Aorta (tissue), 5 donors: ENCODE measurements at regions of chr17 and their contacts with region 1.

Region 1: DNA sequence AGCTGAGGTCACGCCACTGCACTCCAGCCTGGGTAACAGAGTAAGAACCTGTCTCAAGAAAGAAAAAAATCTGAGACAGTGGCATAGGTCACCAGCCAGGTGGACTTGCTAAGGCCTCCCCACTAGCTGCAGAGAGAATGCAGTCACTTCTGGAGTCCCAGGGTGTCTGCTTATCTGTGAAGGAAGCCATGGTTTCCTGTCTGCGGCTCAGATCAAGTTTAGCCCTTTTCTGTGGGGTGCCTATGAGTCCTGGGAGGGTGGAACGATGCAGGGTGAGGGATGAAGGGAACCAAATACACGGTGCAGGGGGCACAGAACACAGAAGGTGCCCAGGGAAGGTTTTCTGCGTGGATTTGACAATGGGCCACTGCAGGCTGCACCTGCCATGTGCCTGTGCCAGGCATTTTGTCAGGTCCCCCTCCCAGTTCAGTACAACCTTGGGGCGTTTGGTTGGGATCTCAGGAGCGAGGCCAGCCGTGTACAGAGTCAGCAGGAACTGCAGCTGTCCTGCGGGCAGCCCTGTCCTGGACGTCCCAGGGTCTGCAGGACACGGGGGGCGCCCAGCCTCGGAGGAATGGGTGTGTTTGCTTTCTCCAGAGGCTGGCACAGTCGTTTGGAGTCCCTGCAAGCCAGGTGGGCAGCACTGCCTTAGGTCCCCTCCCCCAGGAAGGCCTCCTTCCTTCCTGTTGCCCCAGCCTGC is 41.8 kb downstream of the RAB11FIP4 start:
- DNase-seq: no peak
- ATAC-seq: no peak
- H3K4me3 ChIP-seq: no peak overlapping the region
- H3K27ac ChIP-seq: no peak overlapping the region
- H3K4me1 ChIP-seq: no peaks in the 10 kb centered on the region
- H3K27me3 ChIP-seq: no peaks in the 10 kb centered on the region

Region 2: GRCh38 chr17:31524926-31525800 is 91.9 kb after region 1 on chr17:
- intact Hi-C with region 1: loop called (anchors 1 to 5 kb)
- DNase-seq: peak; percentile 93 to 98
- ATAC-seq: peak; percentile 81
- H3K4me3 ChIP-seq: no peak overlapping the region
- H3K27ac ChIP-seq: no peak overlapping the region
- H3K4me1 ChIP-seq: no peaks in the 10 kb centered on the region
- H3K27me3 ChIP-seq: no peaks in the 10 kb centered on the region

Region 3: GRCh38 chr17:31900877-31901276 is 467.6 kb after region 1 on chr17:
- intact Hi-C with region 1: loop called (anchors 5 to 10 kb)
- DNase-seq: no peak
- ATAC-seq: no peak
- H3K4me3 ChIP-seq: peak overlapping the region; percentile 82
- H3K27ac ChIP-seq: no peak overlapping the region
- H3K4me1 ChIP-seq: no peaks in the 10 kb centered on the region
- H3K27me3 ChIP-seq: no peaks in the 10 kb centered on the region

Region 4: DNA sequence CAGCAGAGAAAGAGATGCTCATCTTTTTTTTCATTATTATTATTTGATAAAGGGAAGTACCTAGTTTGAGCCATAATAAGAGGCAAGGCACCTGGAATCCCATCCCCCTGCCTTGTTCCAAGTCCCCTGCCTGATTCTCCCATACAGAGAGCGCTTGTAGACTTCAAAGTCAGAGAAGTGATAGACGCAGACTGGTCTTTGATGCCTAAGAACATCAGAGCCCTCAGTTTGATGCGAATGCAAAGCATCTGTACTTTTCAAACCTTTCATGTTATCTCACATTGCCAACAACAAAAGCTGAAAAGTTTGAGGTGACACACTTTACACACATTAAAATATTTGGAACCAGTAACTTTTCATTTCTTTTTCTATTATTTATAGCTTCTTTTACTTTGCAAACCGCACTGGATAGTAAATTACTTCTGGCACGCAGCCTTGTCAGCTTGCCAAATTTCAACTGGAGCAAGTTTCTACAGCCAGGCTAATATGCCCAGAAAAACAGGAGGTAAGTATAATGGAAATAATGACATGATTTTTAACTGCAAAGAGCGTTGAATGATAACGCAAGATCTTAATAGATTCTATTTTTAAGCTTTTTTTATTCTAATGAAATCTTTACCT is 474.2 kb after region 1 on chr17:
- intact Hi-C with region 1: loop called (anchors 5 to 10 kb)
- DNase-seq: peak in 1 of 2 donors; percentile 71
- ATAC-seq: no peak
- H3K4me3 ChIP-seq: no peak overlapping the region
- H3K27ac ChIP-seq: peak overlapping the region in 1 of 2 donors; percentile 33
- H3K4me1 ChIP-seq: peaks cover 0 to 2% of the 10 kb centered on the region in 2 donors
- H3K27me3 ChIP-seq: no peaks in the 10 kb centered on the region